ENCODE measurements at regions of chr2 and their contacts with region 1.

Region 1: GRCh38 chr2:28392297-28393113 is at the start of gene FOSL2:
- DNase-seq: peak; percentile 96 to 98 (median 97)
- H3K4me3 ChIP-seq: peak within 1 kb of the TSS; percentile 85
- H3K27ac ChIP-seq: peak within 1 kb of the TSS; percentile 98 to 99
- H3K4me1 ChIP-seq: no peaks in the 10 kb centered on the region
- H3K27me3 ChIP-seq: no peaks in the 10 kb centered on the region
- CTCF ChIP-seq: peak in 1 of 3 donors; percentile 16
- EP300 ChIP-seq: peak; percentile 94
- POLR2A ChIP-seq: peak; percentile 98
- total RNA-seq, gene FOSL2: 117 to 322 (median 152) TPM

Region 2: DNA sequence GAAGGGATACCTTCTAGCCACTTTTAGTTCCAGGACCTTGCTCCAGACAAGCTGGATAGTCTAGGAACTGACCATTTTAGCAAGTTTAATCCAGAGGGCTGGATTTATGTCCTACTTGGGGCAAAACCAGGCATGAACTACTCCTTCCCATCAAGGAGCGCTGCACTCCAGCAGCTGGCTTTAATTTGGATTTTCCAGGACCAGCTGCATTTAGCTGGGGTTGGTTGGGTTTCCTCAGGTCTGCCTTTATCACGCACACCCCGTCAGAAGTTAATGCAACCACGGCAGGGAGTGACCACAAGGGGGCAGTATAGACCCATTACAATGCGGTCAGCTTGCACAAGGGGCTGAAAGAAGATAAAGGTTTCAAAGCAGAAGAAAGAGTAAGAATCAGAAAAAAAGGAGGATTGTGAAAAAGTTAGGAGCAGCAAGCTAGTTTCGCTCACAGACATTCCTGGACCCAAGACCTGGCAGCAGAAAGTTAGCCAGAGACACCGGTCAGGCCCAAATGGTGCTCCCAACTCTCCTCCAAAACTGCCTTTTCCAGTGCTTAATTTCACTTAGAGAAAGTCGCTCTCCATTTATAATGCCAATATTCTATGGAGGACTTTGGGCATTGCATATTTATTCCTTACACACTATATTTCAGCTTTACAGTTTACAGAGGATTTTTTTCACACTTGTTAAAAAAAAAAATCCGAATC is 688.7 kb before region 1 on chr2:
- intact Hi-C with region 1: loop called in 2 of 4 experiments (anchors 5 kb)
- DNase-seq: peak; percentile 82 to 93 (median 87)
- H3K4me3 ChIP-seq: no peak overlapping the region
- H3K27ac ChIP-seq: no peak overlapping the region
- H3K4me1 ChIP-seq: peaks cover 20% of the 10 kb centered on the region
- H3K27me3 ChIP-seq: no peaks in the 10 kb centered on the region
- CTCF ChIP-seq: peak; percentile 79 to 95 (median 93)
- EP300 ChIP-seq: no peak
- POLR2A ChIP-seq: no peak

Region 3: DNA sequence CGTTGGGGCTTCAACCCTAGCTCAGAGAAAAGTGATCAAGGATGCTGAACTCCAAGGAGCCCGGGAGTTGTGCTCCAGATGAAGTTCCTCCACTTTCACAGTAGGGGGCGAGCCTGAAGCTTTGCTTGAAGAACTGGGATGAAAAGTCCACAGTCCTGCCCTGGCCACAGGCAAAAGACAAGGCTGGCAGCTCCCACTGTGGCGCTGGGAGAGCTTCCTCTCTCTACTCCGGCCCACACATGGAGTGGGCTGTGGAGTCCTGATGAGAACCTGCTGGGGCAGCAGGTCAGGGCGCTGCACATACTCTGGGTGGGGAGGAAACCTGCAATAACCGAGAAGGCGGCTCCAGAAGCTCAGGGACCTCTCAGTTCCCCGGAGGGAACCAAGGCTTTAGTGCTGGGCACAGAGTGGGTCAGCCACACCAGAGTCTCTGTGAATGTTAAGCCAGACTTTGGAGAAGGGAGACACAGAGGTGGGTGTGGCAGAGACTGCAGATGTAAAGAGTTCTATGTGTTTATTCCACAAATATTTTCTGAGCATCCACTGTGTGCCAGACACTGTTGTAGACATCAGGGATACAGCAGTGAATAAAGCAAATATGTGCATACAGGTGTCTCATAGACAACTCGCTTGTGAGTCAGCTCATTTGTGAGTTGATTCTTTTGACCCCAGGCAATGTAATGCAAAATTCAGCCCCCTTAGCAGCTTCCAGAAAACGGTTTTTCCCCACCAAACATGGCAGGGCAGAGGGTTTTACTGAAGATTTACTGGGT is 668.9 kb before region 1 on chr2:
- intact Hi-C with region 1: loop called in 2 of 4 experiments (anchors 5 kb)
- DNase-seq: peak; percentile 70 to 81 (median 75)
- H3K4me3 ChIP-seq: no peak overlapping the region
- H3K27ac ChIP-seq: peak overlapping the region; percentile 79 to 80
- H3K4me1 ChIP-seq: peaks cover 10% of the 10 kb centered on the region
- H3K27me3 ChIP-seq: peaks cover 2% of the 10 kb centered on the region
- CTCF ChIP-seq: peak; percentile 65 to 87 (median 84)
- EP300 ChIP-seq: no peak
- POLR2A ChIP-seq: no peak

Region 4: GRCh38 chr2:27890146-27890923 is 502.2 kb before region 1 on chr2 and contains the starts of genes BABAM2 and RBKS:
- intact Hi-C with region 1: loop called in 3 of 4 experiments (anchors 2 to 10 kb)
- DNase-seq: peak; percentile 87 to 94 (median 90)
- H3K4me3 ChIP-seq: peak within 1 kb of the TSS; percentile 87
- H3K27ac ChIP-seq: peak within 1 kb of the TSS; percentile 76 to 97
- H3K4me1 ChIP-seq: peaks cover 3% of the 10 kb centered on the region
- H3K27me3 ChIP-seq: peaks cover 3% of the 10 kb centered on the region
- CTCF ChIP-seq: peak in 2 of 3 donors; percentile 8 to 26
- EP300 ChIP-seq: peak; percentile 69
- POLR2A ChIP-seq: peak; percentile 85
- total RNA-seq, gene BABAM2: 24.2 to 51.3 (median 46.8) TPM
- total RNA-seq, gene RBKS: 1.9 to 32.9 (median 4.0) TPM

Region 5: GRCh38 chr2:27960237-27960912 is 432.1 kb before region 1 on chr2:
- intact Hi-C with region 1: loop called in 2 of 4 experiments (anchors 2 to 5 kb)
- DNase-seq: no peak
- H3K4me3 ChIP-seq: no peak overlapping the region
- H3K27ac ChIP-seq: peak overlapping the region in 1 of 2 donors; percentile 8
- H3K4me1 ChIP-seq: peaks cover 3% of the 10 kb centered on the region
- H3K27me3 ChIP-seq: no peaks in the 10 kb centered on the region
- CTCF ChIP-seq: no peak
- EP300 ChIP-seq: no peak
- POLR2A ChIP-seq: no peak

Region 6: DNA sequence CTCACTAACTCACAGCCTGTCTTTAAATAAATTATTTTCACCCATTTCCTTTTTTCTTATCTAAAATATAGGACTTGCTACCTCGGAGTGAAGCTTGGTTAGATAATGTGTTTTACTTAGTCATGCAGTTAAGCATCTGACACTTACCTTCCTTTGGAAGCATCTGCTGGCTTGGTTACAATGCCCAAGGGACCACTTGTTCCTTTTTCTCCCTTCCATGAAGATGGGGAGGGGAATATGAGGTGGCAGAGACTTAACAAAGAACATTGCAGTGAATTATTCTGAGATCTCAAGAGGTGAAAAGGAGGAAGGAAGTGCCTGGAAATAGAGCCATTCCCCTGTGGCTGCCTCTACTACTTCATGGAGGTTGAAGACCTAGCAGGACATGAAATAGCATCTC is 145.2 kb before region 1 on chr2:
- intact Hi-C with region 1: loop called in 1 of 4 experiments (anchors 10 kb)
- DNase-seq: no peak
- H3K4me3 ChIP-seq: no peak overlapping the region
- H3K27ac ChIP-seq: no peak overlapping the region
- H3K4me1 ChIP-seq: no peaks in the 10 kb centered on the region
- H3K27me3 ChIP-seq: no peaks in the 10 kb centered on the region
- CTCF ChIP-seq: no peak
- EP300 ChIP-seq: no peak
- POLR2A ChIP-seq: no peak

Region 7: DNA sequence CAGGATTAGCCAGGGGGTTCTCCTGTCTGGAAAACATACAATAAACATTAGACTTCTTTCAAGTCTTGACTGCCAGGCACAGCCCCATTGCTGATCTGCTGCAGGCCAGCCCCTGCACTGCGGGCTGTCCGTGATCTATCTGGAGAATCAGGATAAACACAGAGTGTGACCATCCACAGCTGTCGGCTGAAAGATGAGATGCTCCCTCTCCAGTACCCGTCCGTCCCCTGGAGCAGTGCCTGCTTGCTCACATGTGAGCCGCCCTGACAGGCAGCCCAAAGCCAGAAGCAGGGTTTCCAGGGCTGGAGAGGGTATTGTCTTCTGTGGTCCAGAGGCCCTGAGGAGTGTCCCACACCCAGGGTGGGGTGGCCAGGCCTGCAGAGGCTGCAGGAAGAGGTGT is 45.9 kb before region 1 on chr2:
- intact Hi-C with region 1: loop called in 2 of 4 experiments (anchors 5 kb)
- DNase-seq: peak in 1 of 5 donors; percentile 22
- H3K4me3 ChIP-seq: no peak overlapping the region
- H3K27ac ChIP-seq: no peak overlapping the region
- H3K4me1 ChIP-seq: peaks cover 8% of the 10 kb centered on the region
- H3K27me3 ChIP-seq: no peaks in the 10 kb centered on the region
- CTCF ChIP-seq: no peak
- EP300 ChIP-seq: no peak
- POLR2A ChIP-seq: no peak

Measured in ovary (tissue), 10 donors.